ENCODE measurements at regions of chr17 and their contacts with region 1.

Region 1: DNA sequence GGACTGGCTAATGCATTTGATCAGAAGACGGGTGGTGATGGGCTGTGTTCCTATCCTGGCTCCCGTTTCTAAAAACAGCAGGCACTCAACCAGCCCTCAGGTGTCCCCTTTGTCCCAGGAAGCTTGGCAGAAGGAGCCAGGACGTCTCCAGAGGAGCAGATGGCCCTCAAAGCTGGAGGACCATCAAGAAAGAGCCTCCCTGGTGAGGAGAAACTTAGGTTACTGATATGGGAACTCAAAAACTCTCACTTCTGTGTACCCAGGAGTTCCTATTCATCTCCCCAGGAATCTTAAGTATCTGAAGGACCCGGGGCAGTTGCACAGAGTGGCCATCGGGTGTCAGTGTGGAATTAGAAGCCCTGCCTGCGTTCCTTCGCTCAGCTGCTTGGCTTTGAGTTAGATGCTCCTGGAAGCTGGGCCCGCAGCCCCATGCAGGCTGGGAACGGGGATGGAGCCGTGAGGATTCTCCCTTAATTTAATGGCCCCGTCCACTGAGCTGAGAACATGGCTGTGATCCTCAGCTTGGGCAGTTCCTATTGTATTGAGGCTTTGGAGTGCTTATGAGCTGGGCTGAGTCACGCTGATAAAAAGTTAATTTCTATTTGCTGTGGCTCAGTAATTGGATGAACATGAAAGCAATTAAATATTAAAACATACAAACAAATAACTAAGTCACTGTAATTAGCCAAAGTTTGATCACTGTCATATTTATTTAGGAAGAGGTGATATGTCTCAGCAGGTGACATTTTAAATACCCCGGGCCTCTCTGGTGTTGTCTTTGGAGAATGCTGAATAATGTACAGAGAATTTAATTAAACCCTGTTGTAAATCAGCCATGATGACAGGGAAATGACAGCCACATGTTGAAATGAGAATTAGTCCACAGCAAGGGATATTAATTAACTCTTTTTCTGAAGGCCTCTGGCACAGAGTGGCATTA is 402.1 kb downstream of the SEC14L1 start:
- H3K4me3 ChIP-seq: no peak overlapping the region
- H3K27ac ChIP-seq: no peak overlapping the region; the same call in 1 of the 2 replicates
- H3K4me1 ChIP-seq: peaks cover 13% of the 10 kb centered on the region
- CTCF ChIP-seq: peak; percentile 75; the same call in 1 of the 2 replicates

Region 2: DNA sequence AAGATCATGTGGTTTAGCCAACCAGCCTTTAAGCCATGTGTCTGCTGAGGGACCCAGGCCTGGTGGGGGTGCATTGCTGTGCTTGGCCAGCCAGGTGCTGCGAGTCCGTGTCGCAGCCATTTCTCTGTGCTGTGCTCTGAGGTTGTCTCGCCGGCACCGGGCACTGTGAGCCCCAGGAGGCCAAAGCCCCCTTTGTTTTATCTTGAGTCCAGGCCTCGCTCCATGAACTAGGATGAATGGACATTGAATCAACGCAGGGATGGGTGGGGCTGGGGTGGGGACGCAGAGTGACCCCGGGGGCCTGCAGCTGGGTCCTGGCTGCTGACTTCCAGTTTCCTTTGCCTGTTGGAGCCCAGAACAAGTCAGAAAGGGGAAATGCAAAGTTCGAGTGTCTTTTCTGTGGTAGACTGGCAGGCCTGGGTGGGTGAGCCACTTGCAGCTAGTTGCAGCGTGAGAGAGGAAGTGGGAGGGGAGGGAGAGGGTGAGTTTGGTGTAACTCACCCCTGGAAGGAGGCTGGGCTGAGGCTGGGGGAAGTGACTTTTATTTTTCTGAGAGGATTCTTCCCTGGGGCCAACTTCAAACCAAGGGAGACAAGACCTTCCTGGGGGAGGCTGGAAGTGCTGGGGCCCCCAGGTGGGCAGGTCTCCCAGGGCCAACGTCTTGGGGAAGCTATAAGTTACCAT is 77.3 kb before region 1 on chr17:
- CTCF ChIA-PET with region 1: no interaction called
- POLR2A ChIA-PET with region 1: no interaction called
- H3K4me3 ChIP-seq: no peak overlapping the region
- H3K27ac ChIP-seq: no peak overlapping the region
- H3K4me1 ChIP-seq: no peaks in the 10 kb centered on the region
- CTCF ChIP-seq: no peak

Region 3: DNA sequence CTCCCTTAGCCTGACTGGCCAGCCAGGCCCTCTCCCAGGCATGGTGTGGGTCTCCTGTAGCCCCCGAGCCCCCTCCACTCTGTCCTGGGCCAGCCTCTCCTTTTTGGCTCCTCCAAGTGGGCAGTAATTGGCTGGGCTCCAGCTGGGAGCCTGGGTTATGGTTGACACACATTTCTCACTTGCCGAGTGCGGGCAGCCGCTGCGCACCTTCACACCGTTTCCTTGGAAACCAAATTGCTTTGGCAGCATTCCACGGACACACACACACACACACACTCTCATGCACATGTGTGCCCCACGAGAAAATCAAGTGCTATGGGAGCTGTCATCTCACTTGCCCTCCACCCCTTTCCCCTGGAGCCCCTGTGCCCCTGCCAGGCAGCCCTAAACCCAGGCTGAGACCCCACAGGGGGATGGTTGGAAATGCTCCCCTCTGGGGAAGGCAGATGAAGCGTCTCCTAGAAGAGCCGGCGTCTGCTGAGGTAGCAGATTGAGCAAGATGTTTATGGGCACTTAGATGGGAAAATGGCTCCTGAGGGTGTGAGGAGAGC is 13.0 kb after region 1 on chr17:
- CTCF ChIA-PET with region 1: interaction called, 14 read pairs
- POLR2A ChIA-PET with region 1: no interaction called
- H3K4me3 ChIP-seq: no peak overlapping the region
- H3K27ac ChIP-seq: no peak overlapping the region
- H3K4me1 ChIP-seq: peaks cover 4% of the 10 kb centered on the region
- CTCF ChIP-seq: no peak

Measured in HEK293 (cell line).